Left cardiac atrium (tissue), 4 donors: ENCODE measurements at regions of chr12 and their contacts with region 1.

Region 1: GRCh38 chr12:124388679-124389536 is 94.0 kb downstream of the RFLNA start:
- DNase-seq: peak; percentile 92
- ATAC-seq: peak; percentile 69 to 70

Region 2: GRCh38 chr12:124422570-124423523 is 33.9 kb after region 1 on chr12:
- intact Hi-C with region 1: loop called in 1 of 2 experiments (anchors 5 kb)
- DNase-seq: peak; percentile 96
- ATAC-seq: peak; percentile 78 to 88

Region 3: GRCh38 chr12:124480469-124481256 is 91.8 kb after region 1 on chr12:
- intact Hi-C with region 1: no loop called
- DNase-seq: peak; percentile 66
- ATAC-seq: peak; percentile 29 to 70

Region 4: DNA sequence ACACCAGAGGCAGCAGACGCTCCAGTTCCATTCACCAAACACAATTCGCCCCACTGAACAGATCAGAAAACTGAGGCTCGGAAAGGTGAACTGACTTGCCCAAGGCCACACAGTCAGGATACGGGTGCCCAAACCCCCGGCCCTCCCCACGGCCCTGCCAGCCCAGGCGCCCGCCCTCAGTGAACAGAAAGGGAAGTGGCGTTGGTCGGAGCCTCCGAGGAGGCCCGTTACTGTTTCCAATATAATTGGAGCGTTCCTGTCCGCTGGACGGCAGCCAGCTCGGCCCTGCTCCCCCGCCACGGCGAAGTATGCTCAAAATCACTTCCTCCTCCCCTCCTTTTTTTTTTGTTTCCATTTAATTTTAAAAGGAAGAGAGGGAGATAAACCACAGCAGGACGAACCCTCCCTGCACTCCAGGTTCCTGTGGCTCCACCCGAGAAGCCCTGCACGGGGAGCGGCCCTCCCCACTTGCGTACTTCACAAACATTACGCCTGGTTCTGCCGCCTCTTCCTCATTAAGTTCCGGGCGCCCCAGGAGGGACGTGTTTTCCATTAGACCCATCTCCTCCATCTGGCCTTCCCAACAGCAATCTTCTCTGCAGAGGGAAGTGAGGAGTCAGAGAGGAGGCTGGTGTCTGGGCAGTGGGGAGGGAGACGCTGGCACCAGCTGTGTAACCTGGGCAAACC is 117.4 kb after region 1 on chr12:
- intact Hi-C with region 1: loop called in 1 of 2 experiments (anchors 10 kb)
- DNase-seq: peak; percentile 92
- ATAC-seq: peak; percentile 48 to 68